ENCODE measurements at regions of chr19 and their contacts with region 1.

Region 1: GRCh38 chr19:41837981-41838708 is 6.3 kb downstream of the LYPD4 start:
- DNase-seq: no peak
- H3K4me3 ChIP-seq: no peak overlapping the region
- H3K27me3 ChIP-seq: peaks cover 8% of the 10 kb centered on the region; the same call in 1 of the 2 replicates
- CTCF ChIP-seq: no peak

Region 2: DNA sequence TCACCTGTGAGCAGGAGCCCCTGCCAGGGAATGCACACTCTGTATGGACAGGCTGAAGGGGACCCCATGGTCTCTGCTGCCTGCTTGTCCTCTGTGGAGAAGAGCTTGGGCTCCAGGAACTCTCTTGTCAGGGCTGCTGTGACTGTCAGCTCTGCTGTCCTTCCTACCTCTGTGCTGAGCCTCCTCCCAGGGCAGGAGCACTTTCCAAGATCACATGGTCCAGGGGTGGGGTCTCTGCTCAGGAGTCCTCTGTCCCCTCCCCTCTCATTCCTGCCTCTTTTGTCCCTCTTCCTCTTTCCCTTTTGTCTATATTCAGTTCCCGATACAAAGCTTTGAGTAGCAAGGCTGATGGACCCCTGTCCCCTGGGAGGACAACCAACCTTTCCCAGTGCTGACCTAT is 150.0 kb before region 1 on chr19 and contains the start of gene CEACAM7:
- CTCF ChIA-PET with region 1: no interaction called
- POLR2A ChIA-PET with region 1: no interaction called
- DNase-seq: no peak
- H3K4me3 ChIP-seq: no peak within 1 kb of the TSS
- H3K27me3 ChIP-seq: no peaks in the 10 kb centered on the region
- CTCF ChIP-seq: no peak
- polyA plus RNA-seq, gene CEACAM7: not detected in 2 replicates

Region 3: DNA sequence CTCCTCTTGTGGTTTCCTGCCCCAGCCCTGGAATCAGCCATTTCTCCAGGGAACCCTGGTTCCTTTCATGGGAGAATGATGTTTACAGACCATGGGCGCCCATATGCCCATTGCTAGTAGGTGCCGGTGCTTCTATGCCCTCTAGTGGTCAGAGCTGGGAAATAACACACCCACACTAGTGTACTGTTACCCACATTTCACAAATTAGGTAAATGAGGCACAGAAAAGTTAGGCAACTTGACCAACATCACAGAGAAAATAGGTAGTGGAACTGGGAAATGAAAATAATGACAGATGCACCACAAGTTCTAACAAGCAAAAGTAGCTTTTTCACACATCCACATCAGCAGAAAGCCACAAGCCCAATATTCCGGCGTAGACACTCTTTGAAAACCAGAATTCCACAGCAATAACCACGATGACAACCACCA is 43.1 kb before region 1 on chr19:
- CTCF ChIA-PET with region 1: interaction called, 11 read pairs
- POLR2A ChIA-PET with region 1: no interaction called
- DNase-seq: no peak
- H3K4me3 ChIP-seq: no peak overlapping the region
- H3K27me3 ChIP-seq: peaks cover 4% of the 10 kb centered on the region
- CTCF ChIP-seq: peak; percentile 83

Region 4: DNA sequence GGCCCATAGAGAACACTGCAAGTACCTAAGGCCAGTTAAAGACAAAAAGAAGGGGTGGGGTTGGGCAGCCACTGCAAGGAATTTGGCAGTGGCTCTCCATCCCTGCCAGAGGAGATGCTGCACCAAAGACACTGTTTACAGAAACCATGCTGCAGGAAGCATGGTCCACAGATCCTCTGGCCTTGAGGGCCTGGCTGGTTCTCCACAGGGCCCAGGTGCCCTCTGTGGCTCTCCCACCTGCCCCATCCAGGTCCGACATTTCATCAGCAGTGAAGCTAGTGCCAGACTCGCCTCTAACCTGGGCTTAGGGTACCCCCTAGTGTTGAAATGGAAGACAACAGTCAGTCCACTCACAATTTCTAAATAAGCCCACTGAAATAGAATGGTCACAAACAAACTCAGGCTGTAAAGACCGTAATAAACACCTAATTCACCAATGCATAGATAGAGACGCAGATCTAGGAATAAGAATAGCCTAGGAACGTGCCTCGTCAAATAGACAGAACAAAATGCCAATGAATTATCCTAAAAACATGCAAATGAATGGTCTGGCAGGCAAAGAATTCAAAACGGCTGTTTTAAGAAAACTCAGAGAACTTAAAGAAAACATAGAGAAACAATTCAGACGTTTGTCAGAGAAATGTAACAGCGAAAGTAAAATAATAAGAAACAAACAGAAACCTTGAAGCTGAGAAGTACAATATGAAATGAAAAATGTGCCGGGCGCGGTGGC is 17.0 kb before region 1 on chr19:
- CTCF ChIA-PET with region 1: interaction called, 30 read pairs
- POLR2A ChIA-PET with region 1: no interaction called
- DNase-seq: no peak
- H3K4me3 ChIP-seq: no peak overlapping the region
- H3K27me3 ChIP-seq: no peaks in the 10 kb centered on the region
- CTCF ChIP-seq: peak; percentile 49

Measured in BJ (cell line).